ENCODE measurements at regions of chr18 and their contacts with region 1.

Region 1: DNA sequence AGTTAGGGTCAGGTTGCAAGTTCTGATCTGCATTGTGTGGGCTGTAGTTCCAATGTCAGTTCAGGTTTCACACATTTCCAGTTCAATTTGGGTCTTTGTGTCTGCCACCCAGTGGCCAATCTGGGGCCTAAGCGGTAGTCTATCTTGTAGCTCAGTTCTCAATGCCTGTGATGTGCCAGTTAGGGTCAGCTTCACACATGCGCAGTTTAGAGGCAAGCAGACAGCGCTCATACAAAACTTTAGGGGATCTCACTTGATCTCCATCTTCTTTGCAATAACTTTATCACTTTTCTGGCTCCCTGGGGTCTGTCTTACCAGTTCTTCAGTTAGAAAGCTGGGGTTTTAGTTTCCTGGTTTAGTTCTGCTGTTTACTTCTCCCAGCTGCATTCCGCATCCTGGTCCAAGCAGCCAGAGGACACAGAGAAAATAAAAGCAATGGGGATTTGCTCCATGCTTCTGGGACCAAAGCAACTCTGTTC is 11.0 kb upstream of the ZNF24 start:
- DNase-seq: peak; percentile 81 to 82
- H3K4me3 ChIP-seq: no peak overlapping the region
- H3K27ac ChIP-seq: peak overlapping the region in 1 of 3 donors; percentile 17
- H3K4me1 ChIP-seq: peaks cover 0 to 6% of the 10 kb centered on the region in 2 donors
- H3K27me3 ChIP-seq: no peaks in the 10 kb centered on the region
- CTCF ChIP-seq: peak; percentile 40 to 85 (median 70)
- POLR2A ChIP-seq: no peak

Region 2: GRCh38 chr18:35231052-35231451 is 124.1 kb before region 1 on chr18:
- intact Hi-C with region 1: loop called (anchors 2 kb)
- DNase-seq: peak; percentile 81 to 88
- H3K4me3 ChIP-seq: no peak overlapping the region
- H3K27ac ChIP-seq: no peak overlapping the region
- H3K4me1 ChIP-seq: no peaks in the 10 kb centered on the region
- H3K27me3 ChIP-seq: no peaks in the 10 kb centered on the region
- CTCF ChIP-seq: peak; percentile 68 to 95 (median 84)
- POLR2A ChIP-seq: no peak

Measured in thyroid gland (tissue), 4 donors.